ENCODE measurements at regions of chr14 and their contacts with region 1.

Region 1: DNA sequence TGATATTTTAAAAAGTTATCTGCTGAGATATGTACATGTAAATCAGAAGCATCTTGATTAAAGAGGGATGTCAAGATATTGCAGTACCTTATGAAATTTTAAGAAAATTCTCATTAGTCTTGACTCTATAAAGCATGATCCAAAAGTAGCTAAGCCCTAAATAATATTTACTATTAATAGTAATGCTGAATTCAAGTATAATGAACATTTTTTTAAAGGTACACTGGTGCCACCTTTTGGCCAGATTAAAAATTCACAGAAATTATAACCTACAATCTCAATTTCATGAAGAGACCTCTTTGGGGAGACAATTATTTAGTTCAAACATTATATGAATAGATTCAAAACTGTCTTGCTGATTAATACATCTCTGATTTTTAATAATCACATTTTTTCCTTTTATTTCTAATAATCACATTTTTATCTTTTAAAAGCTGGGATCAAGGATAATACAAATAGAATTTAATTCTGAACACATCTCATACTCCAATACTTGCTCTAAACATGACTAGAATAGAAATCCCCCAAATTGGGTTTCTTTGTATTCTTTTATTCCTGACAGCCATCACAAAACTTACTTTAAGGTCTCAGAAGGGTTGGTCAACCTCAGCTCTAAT is 13.4 kb downstream of the AKAP5 start:
- DNase-seq: no peak
- H3K4me3 Mint-ChIP-seq: no peak overlapping the region
- H3K27ac Mint-ChIP-seq: no peak overlapping the region
- H3K4me1 Mint-ChIP-seq: peaks cover 36% of the 10 kb centered on the region
- H3K27me3 Mint-ChIP-seq: no peaks in the 10 kb centered on the region

Region 2: GRCh38 chr14:63672417-63673180 is 806.1 kb before region 1 on chr14:
- CTCF ChIA-PET with region 1: no interaction called
- POLR2A ChIA-PET with region 1: no interaction called
- intact Hi-C with region 1: no loop called
- DNase-seq: no peak
- H3K4me3 Mint-ChIP-seq: no peak overlapping the region
- H3K27ac Mint-ChIP-seq: no peak overlapping the region
- H3K4me1 Mint-ChIP-seq: no peaks in the 10 kb centered on the region
- H3K27me3 Mint-ChIP-seq: no peaks in the 10 kb centered on the region

Region 3: DNA sequence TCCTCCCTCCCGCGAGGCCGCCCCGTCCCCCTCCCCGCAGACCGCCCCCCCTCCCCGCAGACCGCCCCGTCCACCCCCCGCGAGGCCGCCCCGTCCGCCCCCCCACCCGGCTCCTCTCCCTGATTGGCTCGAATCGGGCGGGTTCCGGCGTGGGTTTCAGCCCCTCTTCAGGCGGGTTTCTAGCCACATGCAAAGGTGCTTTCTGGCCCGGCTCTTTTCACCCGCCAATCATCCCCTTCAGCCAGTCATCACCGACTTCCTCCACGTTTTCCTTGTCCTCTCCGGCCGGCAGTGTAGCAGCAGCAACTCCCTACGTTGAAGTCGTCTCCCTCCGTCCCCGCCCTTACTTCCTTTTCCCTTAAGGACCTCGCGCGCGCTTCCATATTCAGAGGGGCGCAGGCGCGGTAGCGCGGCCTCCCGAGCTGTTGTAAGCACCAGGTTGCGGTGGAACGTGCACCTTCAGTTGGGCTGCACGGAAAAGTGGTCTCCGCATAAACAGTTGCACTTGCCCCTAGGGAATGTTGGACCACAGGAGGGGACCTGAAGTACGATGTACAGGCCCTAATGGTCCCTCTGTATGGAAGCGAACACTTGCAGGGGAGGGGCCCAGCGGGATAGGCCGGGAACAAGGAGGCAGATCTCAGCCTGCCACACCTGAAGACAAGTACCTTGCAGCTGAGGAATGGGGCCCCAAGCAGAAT is 140.0 kb before region 1 on chr14:
- CTCF ChIA-PET with region 1: interaction called, 71 read pairs
- POLR2A ChIA-PET with region 1: no interaction called
- intact Hi-C with region 1: no loop called
- DNase-seq: peak; percentile 93
- H3K4me3 Mint-ChIP-seq: peak overlapping the region; percentile 91
- H3K27ac Mint-ChIP-seq: peak overlapping the region; percentile 95
- H3K4me1 Mint-ChIP-seq: peaks cover 23% of the 10 kb centered on the region
- H3K27me3 Mint-ChIP-seq: no peaks in the 10 kb centered on the region

Region 4: GRCh38 chr14:64410084-64410774 is 68.5 kb before region 1 on chr14:
- CTCF ChIA-PET with region 1: no interaction called
- POLR2A ChIA-PET with region 1: no interaction called
- intact Hi-C with region 1: no loop called
- DNase-seq: no peak
- H3K4me3 Mint-ChIP-seq: no peak overlapping the region
- H3K27ac Mint-ChIP-seq: no peak overlapping the region
- H3K4me1 Mint-ChIP-seq: peaks cover 12% of the 10 kb centered on the region
- H3K27me3 Mint-ChIP-seq: no peaks in the 10 kb centered on the region

Region 5: GRCh38 chr14:64421166-64421565 is 57.6 kb before region 1 on chr14:
- CTCF ChIA-PET with region 1: interaction called, 64 read pairs
- POLR2A ChIA-PET with region 1: no interaction called
- intact Hi-C with region 1: loop called (anchors 2 kb)
- DNase-seq: no peak
- H3K4me3 Mint-ChIP-seq: no peak overlapping the region
- H3K27ac Mint-ChIP-seq: no peak overlapping the region
- H3K4me1 Mint-ChIP-seq: peaks cover 25% of the 10 kb centered on the region
- H3K27me3 Mint-ChIP-seq: no peaks in the 10 kb centered on the region

Region 6: GRCh38 chr14:64438181-64438841 is 40.4 kb before region 1 on chr14:
- CTCF ChIA-PET with region 1: interaction called, 12 read pairs
- POLR2A ChIA-PET with region 1: no interaction called
- intact Hi-C with region 1: no loop called
- DNase-seq: no peak
- H3K4me3 Mint-ChIP-seq: no peak overlapping the region
- H3K27ac Mint-ChIP-seq: no peak overlapping the region
- H3K4me1 Mint-ChIP-seq: peaks cover 13% of the 10 kb centered on the region
- H3K27me3 Mint-ChIP-seq: no peaks in the 10 kb centered on the region

Region 7: GRCh38 chr14:64465191-64465822 is 13.4 kb before region 1 on chr14 and contains the start of gene AKAP5:
- CTCF ChIA-PET with region 1: interaction called, 15 read pairs
- POLR2A ChIA-PET with region 1: interaction called, 5 read pairs
- intact Hi-C with region 1: no loop called
- DNase-seq: peak; percentile 69
- H3K4me3 Mint-ChIP-seq: peak within 1 kb of the TSS; percentile 75
- H3K27ac Mint-ChIP-seq: peak within 1 kb of the TSS; percentile 3
- H3K4me1 Mint-ChIP-seq: peaks cover 37% of the 10 kb centered on the region
- H3K27me3 Mint-ChIP-seq: no peaks in the 10 kb centered on the region
- total RNA-seq, gene AKAP5: 0.74 to 1.1 TPM

Region 8: DNA sequence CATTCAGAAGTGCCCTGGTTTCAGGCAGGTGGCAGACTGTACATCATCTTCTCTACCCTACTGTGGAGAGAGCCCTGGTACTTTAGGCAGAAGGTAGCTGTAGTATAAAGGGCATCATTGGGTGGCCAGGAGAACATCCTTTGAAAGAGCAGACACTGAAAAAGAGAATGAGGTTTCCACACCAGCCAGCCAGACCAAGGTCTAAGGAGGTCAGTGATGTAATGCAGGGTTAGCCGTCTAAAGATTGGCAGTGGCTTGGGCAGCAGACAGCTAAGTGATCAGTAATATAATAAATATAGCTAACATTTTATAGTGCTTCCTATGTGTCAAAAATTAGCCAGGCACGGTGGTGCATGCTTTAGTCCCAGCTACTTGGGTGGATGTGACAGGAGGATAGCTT is 12.9 kb after region 1 on chr14:
- CTCF ChIA-PET with region 1: interaction called, 14 read pairs
- POLR2A ChIA-PET with region 1: interaction called, 4 read pairs
- intact Hi-C with region 1: no loop called
- DNase-seq: no peak
- H3K4me3 Mint-ChIP-seq: no peak overlapping the region
- H3K27ac Mint-ChIP-seq: no peak overlapping the region
- H3K4me1 Mint-ChIP-seq: peaks cover 46% of the 10 kb centered on the region
- H3K27me3 Mint-ChIP-seq: no peaks in the 10 kb centered on the region

Region 9: DNA sequence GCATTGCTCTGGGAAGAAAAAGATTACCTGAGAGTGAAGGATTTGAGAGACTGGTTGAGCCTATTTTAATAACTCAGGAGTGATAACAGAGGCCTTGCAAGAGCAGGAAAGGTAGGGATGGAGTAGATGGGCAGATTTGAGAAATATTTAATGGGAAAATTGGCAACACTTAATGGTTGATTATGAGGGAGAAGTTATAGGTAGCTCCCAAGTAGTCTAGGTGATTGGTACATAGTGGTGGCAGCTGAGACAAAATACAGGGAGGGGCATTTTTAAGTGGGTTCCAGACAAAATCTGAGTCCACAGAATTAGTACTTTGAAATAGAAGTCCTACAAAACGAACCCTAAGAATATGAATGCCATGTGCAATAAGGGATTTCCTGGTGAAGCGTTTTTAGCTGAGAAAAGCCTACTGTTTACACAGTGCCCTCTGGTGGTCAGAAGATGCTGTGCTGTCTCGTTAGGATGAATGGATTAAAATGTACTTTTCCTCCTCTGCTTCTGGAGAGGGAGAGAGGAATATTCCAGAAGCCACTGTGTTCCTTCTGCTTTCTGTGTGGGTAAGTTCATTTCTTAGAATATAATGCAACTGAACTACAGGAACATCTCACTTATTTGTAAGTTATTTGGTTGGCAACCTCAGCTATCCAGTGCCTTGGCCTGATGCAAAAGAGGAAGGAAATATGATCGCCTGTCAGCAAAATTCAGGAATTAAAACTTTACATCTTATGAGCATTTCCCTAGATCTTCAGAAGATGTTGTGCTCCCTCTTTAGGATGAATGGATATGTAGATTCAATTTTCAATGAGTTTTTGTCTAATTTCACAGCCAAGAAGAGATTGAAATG is 32.3 kb after region 1 on chr14:
- CTCF ChIA-PET with region 1: interaction called, 21 read pairs
- POLR2A ChIA-PET with region 1: interaction called, 6 read pairs
- intact Hi-C with region 1: no loop called
- DNase-seq: peak; percentile 74
- H3K4me3 Mint-ChIP-seq: peak overlapping the region; percentile 50
- H3K27ac Mint-ChIP-seq: peak overlapping the region; percentile 78
- H3K4me1 Mint-ChIP-seq: peaks cover 70% of the 10 kb centered on the region
- H3K27me3 Mint-ChIP-seq: no peaks in the 10 kb centered on the region

Measured in activated CD4-positive, alpha-beta memory T cell treated with anti-CD3 and anti-CD28 coated beads for 36 hours (primary cell).